ENCODE measurements at regions of chr4 and their contacts with region 1.

Region 1: GRCh38 chr4:2220016-2220630 is 21.8 kb downstream of the HAUS3 start:
- DNase-seq: peak; percentile 90
- H3K4me3 Mint-ChIP-seq: no peak overlapping the region
- H3K27ac Mint-ChIP-seq: no peak overlapping the region
- H3K4me1 Mint-ChIP-seq: no peaks in the 10 kb centered on the region
- H3K27me3 Mint-ChIP-seq: no peaks in the 10 kb centered on the region

Region 2: GRCh38 chr4:2071912-2072867 is 147.9 kb before region 1 on chr4:
- CTCF ChIA-PET with region 1: no interaction called
- intact Hi-C with region 1: no loop called
- DNase-seq: no peak
- H3K4me3 Mint-ChIP-seq: no peak overlapping the region
- H3K27ac Mint-ChIP-seq: no peak overlapping the region
- H3K4me1 Mint-ChIP-seq: no peaks in the 10 kb centered on the region
- H3K27me3 Mint-ChIP-seq: no peaks in the 10 kb centered on the region

Region 3: GRCh38 chr4:2354118-2354517 is 134.0 kb after region 1 on chr4:
- CTCF ChIA-PET with region 1: interaction called, 4 read pairs
- intact Hi-C with region 1: loop called (anchors 1 kb)
- DNase-seq: peak; percentile 18
- H3K4me3 Mint-ChIP-seq: no peak overlapping the region
- H3K27ac Mint-ChIP-seq: no peak overlapping the region
- H3K4me1 Mint-ChIP-seq: peaks cover 3% of the 10 kb centered on the region
- H3K27me3 Mint-ChIP-seq: no peaks in the 10 kb centered on the region

Region 4: GRCh38 chr4:2424581-2424980 is 204.5 kb after region 1 on chr4:
- CTCF ChIA-PET with region 1: interaction called, 3 read pairs
- intact Hi-C with region 1: loop called (anchors 5 kb)
- DNase-seq: no peak
- H3K4me3 Mint-ChIP-seq: no peak overlapping the region
- H3K27ac Mint-ChIP-seq: no peak overlapping the region
- H3K4me1 Mint-ChIP-seq: peaks cover 6% of the 10 kb centered on the region
- H3K27me3 Mint-ChIP-seq: peaks cover 18% of the 10 kb centered on the region

Region 5: DNA sequence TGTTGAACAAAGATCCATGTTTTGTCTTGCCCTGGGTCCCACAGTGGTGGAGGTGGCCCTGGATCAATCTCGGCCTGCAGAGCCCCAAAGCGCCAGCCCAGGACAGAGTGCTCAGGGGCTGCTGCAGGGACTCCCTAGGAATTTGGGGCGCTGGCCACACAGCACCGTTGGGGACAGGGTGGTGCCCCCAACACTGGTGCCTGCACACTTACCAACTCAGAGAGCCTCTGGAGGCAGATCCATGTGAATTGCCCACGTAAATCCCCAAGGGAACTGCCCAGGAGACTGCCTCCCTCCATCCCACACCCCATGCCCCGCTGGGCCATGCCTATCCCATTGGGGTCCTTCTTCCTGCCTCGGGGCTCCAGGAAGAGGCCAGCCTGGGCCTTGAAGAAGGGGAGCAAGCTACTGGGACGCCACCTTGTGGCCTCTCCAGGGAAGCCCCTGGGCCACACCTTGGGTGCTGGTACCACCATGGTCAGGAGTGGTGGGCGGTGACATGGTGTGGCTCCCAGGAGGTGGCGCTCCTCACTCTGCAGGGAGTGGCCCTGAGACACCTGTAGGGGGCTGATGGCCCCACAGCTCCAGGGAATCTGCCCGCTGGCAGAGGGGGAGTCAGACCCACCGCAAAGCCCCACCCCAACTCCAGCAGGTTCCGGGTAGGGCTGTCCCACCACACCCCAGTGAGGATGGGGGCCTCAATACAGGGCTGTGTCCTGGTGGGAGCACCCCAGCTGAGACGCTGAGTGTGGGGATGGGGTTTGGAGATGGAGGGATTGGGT is 221.5 kb after region 1 on chr4:
- CTCF ChIA-PET with region 1: interaction called, 14 read pairs
- intact Hi-C with region 1: loop called (anchors 1 kb)
- DNase-seq: peak; percentile 86
- H3K4me3 Mint-ChIP-seq: no peak overlapping the region
- H3K27ac Mint-ChIP-seq: no peak overlapping the region
- H3K4me1 Mint-ChIP-seq: peaks cover 2% of the 10 kb centered on the region
- H3K27me3 Mint-ChIP-seq: no peaks in the 10 kb centered on the region

Region 6: DNA sequence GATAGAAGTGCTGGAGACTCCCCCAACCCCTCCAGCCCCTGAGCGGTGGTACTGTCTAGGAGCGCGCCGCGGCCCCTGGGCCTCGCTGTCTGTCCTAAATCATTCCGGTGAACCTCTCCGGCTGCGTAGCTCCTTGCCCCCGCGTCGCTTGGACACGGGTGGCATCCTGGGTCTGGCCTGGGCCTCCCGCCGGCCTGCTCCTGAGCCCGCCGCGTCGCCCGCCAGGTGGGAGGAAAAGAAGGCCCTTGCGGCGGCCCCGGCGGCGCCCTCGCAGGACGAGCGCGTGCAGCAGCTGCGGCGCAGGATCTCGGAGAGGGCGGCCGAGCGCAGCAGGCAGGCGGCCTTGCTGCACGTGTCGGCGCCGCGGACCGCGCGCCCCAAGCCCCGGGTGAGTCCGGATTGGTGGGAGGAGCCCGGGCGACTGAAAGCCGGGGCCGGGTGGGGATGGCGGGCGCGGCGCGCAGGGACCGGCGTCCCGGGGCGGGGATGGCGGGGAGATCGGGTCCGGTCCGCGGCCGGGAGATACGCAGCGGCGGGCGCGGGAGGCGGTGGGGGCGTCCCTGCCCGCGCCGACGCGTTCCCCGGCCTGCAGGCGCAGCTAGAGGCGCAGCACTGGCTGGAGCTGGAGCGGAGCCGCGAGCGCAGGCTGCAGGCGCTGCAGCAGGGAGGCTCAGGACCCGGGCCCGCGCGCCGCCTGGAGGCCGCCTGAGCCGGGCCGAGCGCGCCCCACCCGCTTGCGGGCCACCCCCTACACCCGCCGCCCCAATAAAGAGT is 242.3 kb after region 1 on chr4:
- CTCF ChIA-PET with region 1: interaction called, 7 read pairs
- intact Hi-C with region 1: loop called (anchors 1 kb)
- DNase-seq: peak; percentile 65
- H3K4me3 Mint-ChIP-seq: peak overlapping the region; percentile 58
- H3K27ac Mint-ChIP-seq: no peak overlapping the region
- H3K4me1 Mint-ChIP-seq: peaks cover 13% of the 10 kb centered on the region
- H3K27me3 Mint-ChIP-seq: no peaks in the 10 kb centered on the region

Measured in activated naive CD4-positive, alpha-beta T cell treated with anti-CD3 and anti-CD28 coated beads for 36 hours (primary cell).